ENCODE measurements at regions of chr1 and their contacts with region 1.

Region 1: DNA sequence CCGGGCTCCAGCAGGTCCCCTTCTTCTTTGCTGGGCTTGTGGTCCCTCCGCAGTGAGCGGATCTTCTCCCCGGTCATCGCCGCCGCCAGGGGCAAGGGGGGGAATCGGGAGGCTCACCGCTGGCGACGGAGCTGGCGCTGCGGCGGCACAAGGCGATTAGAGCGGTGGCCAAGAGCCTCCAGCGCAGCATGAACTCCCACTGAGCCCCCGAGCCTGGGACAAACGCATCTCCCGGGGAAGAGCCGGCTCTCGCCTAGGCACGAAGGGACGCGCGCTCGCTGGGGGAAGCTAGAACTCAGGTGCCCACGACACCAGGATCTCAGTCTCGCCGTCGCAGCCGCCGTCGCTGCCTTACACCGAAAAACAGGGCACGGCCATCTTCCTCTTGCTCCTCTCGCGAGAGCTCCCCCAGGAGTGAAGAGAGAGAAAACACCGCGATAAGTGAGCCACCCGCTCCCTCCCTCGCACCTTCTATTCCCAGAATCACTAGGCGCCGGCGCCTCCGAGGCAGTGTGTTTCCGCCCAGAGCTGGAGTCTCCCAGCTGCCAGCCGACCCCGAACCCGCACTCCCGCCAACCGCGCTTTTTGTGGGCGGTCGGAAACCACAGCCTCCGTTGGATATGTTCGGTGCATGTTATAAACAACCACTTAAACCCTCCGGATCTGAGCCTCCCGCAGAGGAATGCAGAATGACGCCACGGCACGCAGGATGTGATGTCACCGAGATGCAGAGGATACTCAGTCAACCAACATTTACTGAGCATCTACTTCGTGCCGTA is at the start of gene ANKRD13C:
- DNase-seq: peak; percentile 95
- H3K4me3 ChIP-seq: peak within 1 kb of the TSS; percentile 67 to 89
- H3K27ac ChIP-seq: peak within 1 kb of the TSS; percentile 91 to 94
- H3K4me1 ChIP-seq: no peaks in the 10 kb centered on the region
- H3K27me3 ChIP-seq: no peaks in the 10 kb centered on the region
- CTCF ChIP-seq: peak in 1 of 4 experiments; percentile 23
- POLR2A ChIP-seq: peak; percentile 83
- total RNA-seq, gene ANKRD13C: 21.7 to 26.2 TPM

Region 2: GRCh38 chr1:70205434-70206118 is 148.9 kb before region 1 on chr1 and contains the start of gene LRRC40:
- intact Hi-C with region 1: loop called (anchors 5 kb)
- DNase-seq: peak; percentile 95
- H3K4me3 ChIP-seq: peak within 1 kb of the TSS; percentile 59 to 91
- H3K27ac ChIP-seq: peak within 1 kb of the TSS; percentile 82 to 84
- H3K4me1 ChIP-seq: no peaks in the 10 kb centered on the region
- H3K27me3 ChIP-seq: no peaks in the 10 kb centered on the region
- CTCF ChIP-seq: no peak
- POLR2A ChIP-seq: peak; percentile 71
- total RNA-seq, gene LRRC40: 10.7 to 18.6 TPM

Region 3: DNA sequence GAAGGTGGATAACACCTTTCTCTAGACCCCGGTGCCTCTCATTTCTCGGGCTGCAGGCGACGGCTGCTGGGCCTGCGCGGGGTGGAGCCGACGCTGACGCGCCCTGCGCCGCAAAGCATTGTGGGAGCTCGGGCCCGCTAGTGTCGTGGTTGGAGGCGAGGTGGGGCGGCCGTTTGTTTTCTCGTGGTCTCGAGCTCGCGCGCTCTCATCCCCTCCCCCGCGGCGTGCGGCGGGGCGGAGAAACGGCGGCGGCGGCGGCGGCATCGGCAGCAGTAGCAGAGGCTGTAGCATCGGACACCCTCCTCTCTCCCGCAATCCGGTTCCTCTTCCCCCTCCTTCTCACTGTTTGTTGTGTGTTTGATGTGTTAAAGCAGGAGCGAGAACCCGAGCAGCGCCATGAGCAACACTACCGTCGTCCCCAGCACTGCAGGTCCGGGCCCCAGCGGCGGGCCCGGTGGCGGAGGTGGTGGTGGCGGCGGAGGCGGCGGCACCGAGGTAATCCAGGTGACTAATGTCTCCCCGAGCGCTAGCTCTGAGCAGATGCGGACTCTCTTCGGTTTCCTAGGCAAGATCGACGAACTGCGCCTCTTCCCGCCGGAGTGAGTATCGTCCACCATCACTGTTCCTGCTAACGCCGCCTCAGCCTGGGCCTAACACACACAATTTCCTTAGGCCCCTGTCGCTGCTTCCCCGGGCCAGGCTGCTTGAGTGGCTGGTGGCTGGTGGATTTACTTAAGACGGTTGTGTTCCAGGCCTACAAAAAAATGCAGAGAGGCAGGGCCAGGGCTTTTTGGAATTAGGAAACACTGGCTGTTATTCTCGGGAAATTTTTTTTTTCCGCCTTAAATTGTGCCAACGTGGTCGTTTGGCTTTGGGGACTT is 133.0 kb before region 1 on chr1 and contains the start of gene SRSF11:
- intact Hi-C with region 1: loop called (anchors 5 kb)
- DNase-seq: peak; percentile 96
- H3K4me3 ChIP-seq: peak within 1 kb of the TSS; percentile 75 to 76
- H3K27ac ChIP-seq: peak within 1 kb of the TSS; percentile 97 to 98
- H3K4me1 ChIP-seq: peaks cover 6% of the 10 kb centered on the region
- H3K27me3 ChIP-seq: no peaks in the 10 kb centered on the region
- CTCF ChIP-seq: peak in 2 of 4 experiments; percentile 20 to 31
- POLR2A ChIP-seq: peak; percentile 92
- total RNA-seq, gene SRSF11: 71.5 to 135 TPM

Region 4: GRCh38 chr1:70410604-70411359 is 56.3 kb after region 1 on chr1 and contains the start of gene CTH:
- intact Hi-C with region 1: loop called (anchors 2 kb)
- DNase-seq: peak; percentile 98
- H3K4me3 ChIP-seq: peak within 1 kb of the TSS; percentile 64 to 76
- H3K27ac ChIP-seq: peak within 1 kb of the TSS; percentile 96 to 99
- H3K4me1 ChIP-seq: no peaks in the 10 kb centered on the region
- H3K27me3 ChIP-seq: no peaks in the 10 kb centered on the region
- CTCF ChIP-seq: peak in 2 of 4 experiments; percentile 10 to 17
- POLR2A ChIP-seq: peak; percentile 93
- total RNA-seq, gene CTH: 8.1 to 12.7 TPM

Region 5: DNA sequence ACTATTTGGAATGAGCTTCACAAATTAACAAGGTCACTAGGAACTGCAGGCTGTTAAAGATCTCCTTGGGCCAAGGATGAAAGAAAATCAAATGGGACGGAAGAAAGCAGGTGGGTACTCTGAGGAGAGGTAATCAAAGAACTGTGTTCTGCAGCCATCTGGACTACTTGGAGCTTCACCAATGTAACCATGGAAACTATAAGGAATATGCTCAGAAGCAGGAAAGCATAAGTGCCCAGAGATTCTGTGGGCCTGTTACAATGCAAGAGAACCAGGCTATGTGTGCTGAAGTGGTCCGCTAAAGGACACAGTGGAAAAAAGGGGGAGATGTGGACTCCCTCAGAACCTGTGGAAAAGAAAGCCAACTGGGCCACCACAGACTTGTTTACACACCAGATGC is 454.5 kb after region 1 on chr1:
- intact Hi-C with region 1: no loop called
- DNase-seq: no peak
- H3K4me3 ChIP-seq: no peak overlapping the region
- H3K27ac ChIP-seq: no peak overlapping the region
- H3K4me1 ChIP-seq: no peaks in the 10 kb centered on the region
- H3K27me3 ChIP-seq: no peaks in the 10 kb centered on the region
- CTCF ChIP-seq: no peak
- POLR2A ChIP-seq: no peak

Measured in prostate gland (tissue), 2 donors.